HEK293 (cell line): ENCODE measurements at regions of chr14 and their contacts with region 1.

Region 1: GRCh38 chr14:69242311-69243224 is 17.4 kb upstream of the GALNT16 start:
- H3K4me3 ChIP-seq: no peak overlapping the region
- H3K27ac ChIP-seq: no peak overlapping the region
- H3K4me1 ChIP-seq: no peaks in the 10 kb centered on the region
- CTCF ChIP-seq: no peak

Region 2: DNA sequence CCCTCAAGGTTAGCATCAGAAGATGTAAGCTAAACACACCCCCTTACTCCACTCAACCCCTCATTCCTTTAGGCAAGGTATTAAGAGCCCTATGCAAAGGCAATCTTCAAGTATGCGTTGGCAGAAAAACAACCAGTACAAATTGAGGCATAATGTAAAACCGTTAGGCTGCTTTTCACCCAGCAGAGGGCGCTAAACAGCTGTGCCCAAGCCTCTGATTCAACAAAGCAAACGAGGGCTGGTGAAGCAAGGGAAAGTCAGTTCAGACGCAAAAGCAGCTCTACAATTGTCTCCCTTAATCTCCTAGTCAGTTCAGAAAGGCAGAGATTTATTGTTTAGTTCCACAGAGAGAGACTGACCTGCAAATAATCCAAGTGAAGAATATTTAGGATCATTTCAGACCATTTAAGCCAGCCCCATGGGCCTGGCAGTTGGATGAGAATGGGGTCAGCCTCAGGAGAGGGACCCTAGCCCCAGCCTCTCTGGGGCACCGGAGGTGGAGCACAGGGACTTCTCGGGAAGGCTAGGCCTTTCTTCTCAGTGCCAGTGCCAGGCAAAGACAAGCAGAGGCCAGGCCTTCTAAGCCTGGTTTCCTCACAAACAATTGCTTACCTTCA is 113.2 kb before region 1 on chr14:
- CTCF ChIA-PET with region 1: interaction called, 17 read pairs
- POLR2A ChIA-PET with region 1: no interaction called
- H3K4me3 ChIP-seq: no peak overlapping the region
- H3K27ac ChIP-seq: no peak overlapping the region
- H3K4me1 ChIP-seq: peaks cover 49% of the 10 kb centered on the region
- CTCF ChIP-seq: peak; percentile 69; the same call in 1 of the 2 replicates

Region 3: DNA sequence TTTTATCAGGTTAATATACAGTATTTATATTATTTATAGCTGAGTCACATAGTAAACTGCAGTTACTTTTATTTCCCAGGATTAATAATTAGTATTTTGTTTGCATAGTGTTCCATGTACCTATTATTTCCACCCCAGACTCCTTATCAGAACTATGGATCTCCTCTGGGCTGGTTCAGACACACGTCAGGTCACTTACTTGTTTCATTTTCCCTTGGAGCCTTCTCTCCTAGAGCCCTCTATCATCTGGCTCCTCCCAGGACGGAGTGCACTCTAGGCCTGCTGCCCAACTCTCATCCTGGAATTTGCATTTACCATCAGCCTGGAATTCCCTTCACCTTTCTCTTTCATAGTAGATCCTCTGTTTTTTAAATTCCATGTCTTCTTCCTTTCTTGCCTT is 11.1 kb before region 1 on chr14:
- CTCF ChIA-PET with region 1: interaction called, 10 read pairs
- POLR2A ChIA-PET with region 1: no interaction called
- H3K4me3 ChIP-seq: no peak overlapping the region
- H3K27ac ChIP-seq: no peak overlapping the region
- H3K4me1 ChIP-seq: no peaks in the 10 kb centered on the region
- CTCF ChIP-seq: no peak

Region 4: GRCh38 chr14:69257501-69257900 is 14.9 kb after region 1 on chr14:
- CTCF ChIA-PET with region 1: interaction called, 30 read pairs
- POLR2A ChIA-PET with region 1: no interaction called
- H3K4me3 ChIP-seq: no peak overlapping the region
- H3K27ac ChIP-seq: no peak overlapping the region
- H3K4me1 ChIP-seq: no peaks in the 10 kb centered on the region
- CTCF ChIP-seq: no peak

Region 5: DNA sequence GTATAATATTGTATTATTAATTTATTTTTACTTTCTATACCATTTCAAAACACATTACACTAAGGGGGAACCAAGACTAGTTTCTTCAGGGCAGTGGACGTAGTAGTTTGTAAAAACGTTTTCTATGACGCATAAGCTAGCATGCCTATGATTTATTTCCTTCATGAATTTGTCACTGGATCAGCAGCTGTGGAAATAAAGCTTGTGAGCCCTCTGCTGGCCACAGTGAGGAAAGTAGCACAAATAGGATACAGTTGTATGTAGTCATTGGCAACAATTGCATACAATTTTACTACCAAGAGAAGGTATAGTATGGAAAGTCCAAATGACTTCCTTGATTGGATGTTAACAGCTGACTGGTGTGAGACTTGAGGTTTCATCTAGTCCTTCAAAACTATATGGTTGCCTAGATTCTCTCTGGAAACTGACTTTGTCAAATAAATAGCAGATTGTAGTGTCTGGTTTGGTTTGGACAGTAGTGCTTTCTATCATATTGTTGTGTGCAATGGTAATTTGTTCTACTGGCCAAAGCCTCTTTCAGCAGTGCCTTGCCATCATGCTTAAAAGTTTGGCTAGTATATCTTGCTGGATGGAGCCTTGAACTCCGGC is 217.6 kb after region 1 on chr14:
- CTCF ChIA-PET with region 1: interaction called, 45 read pairs
- POLR2A ChIA-PET with region 1: no interaction called
- H3K4me3 ChIP-seq: no peak overlapping the region
- H3K27ac ChIP-seq: no peak overlapping the region
- H3K4me1 ChIP-seq: no peaks in the 10 kb centered on the region
- CTCF ChIP-seq: peak; percentile 34; the same call in 1 of the 2 replicates

Region 6: GRCh38 chr14:69475194-69475818 is 232.7 kb after region 1 on chr14:
- CTCF ChIA-PET with region 1: interaction called, 16 read pairs
- POLR2A ChIA-PET with region 1: no interaction called
- H3K4me3 ChIP-seq: no peak overlapping the region
- H3K27ac ChIP-seq: no peak overlapping the region
- H3K4me1 ChIP-seq: no peaks in the 10 kb centered on the region
- CTCF ChIP-seq: no peak

Region 7: DNA sequence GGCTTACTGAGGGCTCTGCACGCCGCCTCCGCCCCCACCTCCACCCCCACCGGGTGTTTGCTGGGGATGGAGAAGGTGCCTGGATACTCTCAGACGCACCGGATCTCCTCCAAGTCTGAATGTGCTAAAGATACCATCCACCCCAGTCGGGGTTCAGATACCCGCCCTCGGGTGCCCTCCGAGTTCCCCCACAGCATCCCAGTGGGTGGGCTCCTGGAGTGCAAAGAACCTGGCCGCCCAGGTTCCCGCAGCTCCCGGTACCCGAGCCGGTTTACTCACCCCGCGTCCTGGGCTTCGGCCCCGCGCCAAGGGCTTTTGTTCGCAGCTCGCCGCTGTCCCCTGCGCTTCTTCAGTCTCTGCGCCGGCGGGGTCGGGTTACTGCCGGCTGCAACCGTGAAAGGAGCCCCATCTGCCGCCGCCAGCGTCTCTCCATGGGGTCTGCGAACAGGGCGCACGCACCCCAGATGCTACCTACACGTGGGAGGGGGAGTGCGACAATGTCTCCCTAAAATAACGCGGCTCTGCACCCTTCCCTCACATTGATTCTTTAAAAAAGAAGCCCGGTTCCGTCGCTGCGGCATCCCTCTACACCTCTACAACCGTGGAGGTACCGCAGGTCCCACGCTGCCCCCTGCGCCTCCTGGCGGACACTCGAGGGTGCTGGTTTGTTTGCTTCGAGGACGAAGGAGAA is 331.8 kb after region 1 on chr14 and contains the start of gene CCDC177:
- CTCF ChIA-PET with region 1: interaction called, 13 read pairs
- POLR2A ChIA-PET with region 1: no interaction called
- H3K4me3 ChIP-seq: peak within 1 kb of the TSS; percentile 51
- H3K27ac ChIP-seq: peak within 1 kb of the TSS; percentile 37; the same call in 1 of the 2 replicates
- H3K4me1 ChIP-seq: peaks cover 3% of the 10 kb centered on the region
- CTCF ChIP-seq: peak; percentile 60